Heart left ventricle (tissue), 16 donors: ENCODE measurements at regions of chr1 and their contacts with region 1.

Region 1: DNA sequence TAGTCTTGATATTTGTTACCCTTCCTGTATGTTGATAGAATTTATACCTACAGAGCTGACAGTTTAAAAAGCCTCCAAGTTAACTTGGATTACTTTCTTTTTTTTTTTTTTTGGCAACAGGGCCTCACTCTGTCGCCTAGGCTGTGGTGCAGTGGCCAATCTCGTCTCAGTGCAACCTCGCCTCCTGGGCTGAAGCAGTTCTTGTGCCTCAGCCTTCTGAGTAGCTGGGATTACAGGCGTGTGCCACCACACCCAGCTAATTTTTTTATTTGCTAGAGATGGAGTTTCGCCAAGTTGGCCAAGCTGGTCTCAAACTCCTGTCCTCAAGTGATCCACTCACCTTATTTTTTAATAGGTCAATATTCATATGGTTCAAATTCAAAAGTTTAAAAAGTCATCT is 32.7 kb downstream of the WDTC1 start:
- DNase-seq: no peak
- ATAC-seq: no peak
- H3K4me3 ChIP-seq: no peak overlapping the region
- H3K27ac ChIP-seq: no peak overlapping the region
- H3K4me1 ChIP-seq: no peaks in the 10 kb centered on the region
- H3K27me3 ChIP-seq: no peaks in the 10 kb centered on the region
- CTCF ChIP-seq: no peak
- POLR2A ChIP-seq: no peak

Region 2: DNA sequence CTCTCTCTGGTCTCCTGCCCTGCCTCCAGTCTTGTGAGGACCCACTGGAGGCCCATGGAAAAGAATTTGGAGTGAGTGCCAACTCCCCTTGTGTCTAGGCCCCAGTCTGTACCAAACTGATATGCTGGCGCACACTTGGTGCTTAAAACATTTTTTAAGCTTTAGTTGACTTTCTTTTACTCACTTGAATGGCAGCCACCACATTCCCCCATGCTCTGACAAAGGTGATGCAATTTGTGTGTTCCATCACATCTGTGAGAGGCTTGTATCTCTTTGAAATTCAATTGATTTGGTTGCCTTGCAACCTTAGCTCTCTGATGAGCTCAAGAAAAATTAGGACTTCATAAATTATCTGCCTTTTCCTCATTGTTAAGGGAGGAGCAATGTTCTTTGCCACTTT is 63.2 kb before region 1 on chr1:
- intact Hi-C with region 1: loop called in 1 of 10 experiments (anchors 10 kb)
- DNase-seq: no peak
- ATAC-seq: no peak
- H3K4me3 ChIP-seq: no peak overlapping the region
- H3K27ac ChIP-seq: no peak overlapping the region
- H3K4me1 ChIP-seq: no peaks in the 10 kb centered on the region
- H3K27me3 ChIP-seq: no peaks in the 10 kb centered on the region
- CTCF ChIP-seq: no peak
- POLR2A ChIP-seq: no peak